Activated naive CD8-positive, alpha-beta T cell treated with anti-CD3 and anti-CD28 coated beads, Interleukin-2, amount 10 ng/mL, durations not matched to agents 7 days and 5 days (primary cell): ENCODE measurements at regions of chr5 and their contacts with region 1.

Region 1: GRCh38 chr5:177425801-177426565 is 493 bp upstream of the GRK6 start:
- DNase-seq: peak; percentile 95
- ATAC-seq: peak; percentile 78
- H3K4me3 Mint-ChIP-seq: peak overlapping the region; percentile 98
- H3K27ac Mint-ChIP-seq: peak overlapping the region; percentile 99
- H3K4me1 Mint-ChIP-seq: peaks cover 41% of the 10 kb centered on the region
- H3K27me3 Mint-ChIP-seq: no peaks in the 10 kb centered on the region

Region 2: GRCh38 chr5:177249761-177250526 is 176.0 kb before region 1 on chr5:
- POLR2A ChIA-PET with region 1: no interaction called
- DNase-seq: no peak
- ATAC-seq: no peak
- H3K4me3 Mint-ChIP-seq: no peak overlapping the region
- H3K27ac Mint-ChIP-seq: no peak overlapping the region
- H3K4me1 Mint-ChIP-seq: no peaks in the 10 kb centered on the region
- H3K27me3 Mint-ChIP-seq: no peaks in the 10 kb centered on the region

Region 3: DNA sequence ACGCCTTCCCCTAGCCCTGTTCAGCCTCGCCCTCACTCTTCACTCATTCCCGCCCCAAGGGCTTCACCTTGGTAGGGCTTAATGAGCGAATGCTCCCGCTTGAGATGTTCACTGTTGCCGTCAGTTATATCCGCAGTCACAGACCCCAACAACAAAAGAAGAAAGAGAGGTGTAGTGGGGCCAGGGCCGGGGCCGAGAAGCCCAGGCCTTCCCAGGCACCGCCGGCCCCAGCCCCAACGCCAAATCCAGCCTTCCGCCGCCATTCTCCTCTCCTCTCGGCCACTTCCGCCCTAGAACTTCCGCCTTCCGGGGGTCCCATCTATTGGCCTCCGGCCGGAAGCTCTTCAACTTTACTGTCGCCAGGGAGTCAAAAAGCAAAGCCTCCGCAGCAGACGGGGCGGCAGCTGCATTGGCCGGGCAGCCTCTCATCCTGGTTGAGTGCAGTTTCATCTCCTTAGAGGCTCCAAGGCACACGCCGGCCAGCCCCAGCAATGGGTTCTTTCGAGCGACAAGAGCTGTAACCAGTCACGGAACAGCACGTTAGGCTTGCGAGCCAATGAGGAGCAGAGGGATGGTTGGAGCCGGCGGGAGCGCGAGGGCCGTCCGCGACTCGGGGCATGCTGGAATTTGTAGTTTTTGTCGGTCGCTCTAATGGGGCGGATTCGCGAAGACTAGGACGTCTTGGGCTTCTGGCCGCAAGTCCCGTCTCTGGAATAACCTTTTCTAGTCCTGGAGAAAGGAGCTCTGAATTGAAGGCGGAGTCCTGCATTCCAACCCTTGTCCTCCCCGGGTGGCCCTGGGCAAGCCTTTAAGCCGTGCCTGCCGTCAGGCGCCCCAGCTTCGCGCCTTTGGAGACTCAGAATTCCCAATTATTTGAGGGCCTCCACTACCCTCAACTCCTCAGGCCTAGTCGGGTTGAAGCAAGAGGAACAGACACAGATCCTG is 74.3 kb before region 1 on chr5 and contains the start of gene LMAN2:
- POLR2A ChIA-PET with region 1: interaction called, 11 read pairs
- DNase-seq: peak; percentile 87
- ATAC-seq: peak; percentile 99
- H3K4me3 Mint-ChIP-seq: peak within 1 kb of the TSS; percentile 99
- H3K27ac Mint-ChIP-seq: peak within 1 kb of the TSS; percentile 100
- H3K4me1 Mint-ChIP-seq: peaks cover 52% of the 10 kb centered on the region
- H3K27me3 Mint-ChIP-seq: no peaks in the 10 kb centered on the region
- total RNA-seq, gene LMAN2: 110 to 116 TPM

Region 4: GRCh38 chr5:177412603-177413233 is 13.3 kb before region 1 on chr5:
- POLR2A ChIA-PET with region 1: interaction called, 34 read pairs
- DNase-seq: no peak
- ATAC-seq: no peak
- H3K4me3 Mint-ChIP-seq: peak overlapping the region; percentile 15
- H3K27ac Mint-ChIP-seq: peak overlapping the region; percentile 79
- H3K4me1 Mint-ChIP-seq: peaks cover 24% of the 10 kb centered on the region
- H3K27me3 Mint-ChIP-seq: no peaks in the 10 kb centered on the region

Region 5: GRCh38 chr5:177446200-177447065 is 20.4 kb after region 1 on chr5 and contains the start of gene PRR7:
- POLR2A ChIA-PET with region 1: interaction called, 312 read pairs
- DNase-seq: peak; percentile 89
- ATAC-seq: peak; percentile 76
- H3K4me3 Mint-ChIP-seq: peak within 1 kb of the TSS; percentile 80
- H3K27ac Mint-ChIP-seq: peak within 1 kb of the TSS; percentile 87
- H3K4me1 Mint-ChIP-seq: peaks cover 30% of the 10 kb centered on the region
- H3K27me3 Mint-ChIP-seq: no peaks in the 10 kb centered on the region
- total RNA-seq, gene PRR7: 10.0 to 10.6 TPM

Region 6: DNA sequence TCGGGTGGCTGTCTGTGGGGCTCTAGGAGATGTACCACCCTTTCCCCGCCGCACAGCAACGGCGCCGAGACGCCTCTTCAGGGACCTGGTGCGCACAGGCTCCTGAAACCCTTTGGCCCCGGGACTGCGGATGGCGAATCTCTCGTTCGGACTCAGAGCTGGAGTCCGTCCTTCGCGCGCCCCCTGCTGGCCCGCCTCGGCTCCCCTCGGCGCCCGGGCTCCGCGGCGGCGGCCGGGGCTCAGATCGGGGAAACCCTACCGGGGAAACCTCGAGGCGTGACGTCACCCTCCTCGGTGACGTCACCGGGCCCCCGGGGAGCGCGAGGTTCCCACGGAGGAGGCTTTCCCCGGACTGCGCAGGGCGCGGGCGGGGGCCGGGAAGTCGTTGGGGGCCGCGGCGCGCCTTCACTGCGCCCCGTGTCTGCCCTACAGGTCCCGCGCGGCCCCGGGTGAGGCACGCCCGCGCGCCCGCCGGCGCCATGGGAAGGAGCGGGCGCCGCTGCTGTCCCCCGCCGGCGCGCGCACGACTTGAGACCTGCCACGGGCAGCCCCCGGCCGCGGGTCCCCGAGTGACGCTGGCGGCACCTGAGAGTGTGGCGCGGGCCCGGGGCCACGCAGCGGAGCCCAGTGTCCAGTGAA is 28.5 kb after region 1 on chr5:
- POLR2A ChIA-PET with region 1: interaction called, 312 read pairs
- DNase-seq: peak; percentile 98
- ATAC-seq: peak; percentile 51
- H3K4me3 Mint-ChIP-seq: peak overlapping the region; percentile 85
- H3K27ac Mint-ChIP-seq: peak overlapping the region; percentile 64
- H3K4me1 Mint-ChIP-seq: peaks cover 11% of the 10 kb centered on the region
- H3K27me3 Mint-ChIP-seq: peaks cover 6% of the 10 kb centered on the region